ENCODE measurements at regions of chr15 and their contacts with region 1.

Region 1: DNA sequence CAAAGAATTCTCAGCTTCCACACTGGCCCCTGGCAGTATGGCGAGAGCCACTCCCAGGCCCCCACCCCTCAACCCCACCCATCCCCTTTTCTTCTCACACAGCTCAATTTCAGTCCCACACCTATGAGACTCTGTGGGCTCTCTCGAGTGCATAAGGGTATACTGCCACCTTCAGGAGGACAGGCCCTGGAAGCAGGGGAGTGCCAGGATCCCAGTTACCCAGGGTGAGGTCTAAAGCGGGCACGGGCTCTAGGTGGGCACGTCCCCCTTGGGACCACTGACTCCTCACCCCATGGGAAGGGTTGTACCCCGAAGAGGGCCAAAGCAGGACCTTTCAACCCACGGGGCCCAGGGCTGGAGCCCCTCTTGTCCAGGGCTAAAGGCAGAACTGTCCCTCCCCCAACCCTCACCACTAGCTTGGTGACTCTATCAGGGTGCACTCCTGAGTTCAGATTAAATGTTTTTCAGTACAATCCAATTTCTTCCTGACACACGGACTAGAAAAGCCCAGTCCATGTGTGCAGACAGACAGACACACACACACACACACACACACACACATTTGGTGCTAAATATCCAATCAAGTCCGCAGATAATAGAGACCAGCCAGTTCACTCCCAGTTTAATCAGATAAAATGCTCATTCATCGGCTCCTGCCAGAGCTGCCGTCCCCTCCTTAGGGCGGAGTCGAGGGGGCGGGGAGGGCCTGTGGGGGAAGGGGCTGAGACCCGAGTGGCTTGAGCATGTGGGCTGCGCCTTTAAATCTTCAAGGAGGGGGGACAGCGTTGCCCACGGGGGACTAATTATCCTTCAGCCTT is 59.4 kb downstream of the CYP11A1 start:
- DNase-seq: peak; percentile 61
- H3K4me3 Mint-ChIP-seq: no peak overlapping the region
- H3K27ac Mint-ChIP-seq: no peak overlapping the region
- H3K4me1 Mint-ChIP-seq: no peaks in the 10 kb centered on the region
- H3K27me3 Mint-ChIP-seq: peaks cover 10% of the 10 kb centered on the region

Region 2: DNA sequence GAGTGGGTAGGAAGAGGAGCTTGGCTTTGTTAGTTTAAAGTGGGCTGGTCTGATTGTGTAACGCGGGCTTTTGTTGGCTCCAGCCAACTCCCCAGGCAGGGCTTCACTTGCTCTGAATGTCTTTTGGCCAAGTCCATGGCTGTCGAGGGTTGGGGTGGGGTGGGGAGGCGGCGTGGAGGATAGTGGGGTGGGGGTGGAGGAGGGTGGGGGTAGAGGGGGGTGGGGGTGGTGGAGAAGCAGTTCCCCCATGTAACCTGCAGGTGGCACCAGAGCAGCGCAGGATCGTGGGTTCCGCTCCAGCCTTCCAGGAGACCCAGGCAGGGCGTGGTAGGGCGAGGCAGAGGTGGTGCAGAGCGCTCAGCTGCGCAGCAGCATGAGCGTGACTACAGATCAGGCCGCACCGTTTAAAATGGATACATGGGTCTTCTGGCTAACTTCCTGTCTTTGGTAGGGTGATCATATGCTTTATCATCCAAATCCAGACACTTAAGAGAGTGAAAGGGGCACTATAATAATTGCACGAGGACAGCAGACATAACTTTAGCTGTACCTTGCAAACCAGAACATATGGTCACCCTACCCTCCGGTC is 254.0 kb before region 1 on chr15:
- CTCF ChIA-PET with region 1: interaction called, 3 read pairs
- intact Hi-C with region 1: loop called (anchors 5 kb)
- DNase-seq: peak; percentile 82
- H3K4me3 Mint-ChIP-seq: peak overlapping the region; percentile 23
- H3K27ac Mint-ChIP-seq: no peak overlapping the region
- H3K4me1 Mint-ChIP-seq: peaks cover 5% of the 10 kb centered on the region
- H3K27me3 Mint-ChIP-seq: no peaks in the 10 kb centered on the region

Region 3: GRCh38 chr15:74584779-74585178 is 276.7 kb after region 1 on chr15:
- CTCF ChIA-PET with region 1: no interaction called
- intact Hi-C with region 1: no loop called
- DNase-seq: no peak
- H3K4me3 Mint-ChIP-seq: no peak overlapping the region
- H3K27ac Mint-ChIP-seq: no peak overlapping the region
- H3K4me1 Mint-ChIP-seq: no peaks in the 10 kb centered on the region
- H3K27me3 Mint-ChIP-seq: no peaks in the 10 kb centered on the region